ENCODE measurements at regions of chr10 and their contacts with region 1.

Region 1: GRCh38 chr10:75187961-75188426 is 22.6 kb upstream of the VDAC2 start:
- DNase-seq: peak; percentile 77
- H3K4me3 Mint-ChIP-seq: no peak overlapping the region
- H3K27ac Mint-ChIP-seq: no peak overlapping the region
- H3K4me1 Mint-ChIP-seq: peaks cover 8% of the 10 kb centered on the region
- H3K27me3 Mint-ChIP-seq: no peaks in the 10 kb centered on the region
- CTCF ChIP-seq: peak; percentile 75

Region 2: GRCh38 chr10:75226656-75227055 is 38.7 kb after region 1 on chr10:
- CTCF ChIA-PET with region 1: interaction called, 49 read pairs
- intact Hi-C with region 1: loop called (anchors 1 kb)
- DNase-seq: no peak
- H3K4me3 Mint-ChIP-seq: no peak overlapping the region
- H3K27ac Mint-ChIP-seq: peak overlapping the region; percentile 47
- H3K4me1 Mint-ChIP-seq: peaks cover 85% of the 10 kb centered on the region
- H3K27me3 Mint-ChIP-seq: no peaks in the 10 kb centered on the region
- CTCF ChIP-seq: no peak

Region 3: DNA sequence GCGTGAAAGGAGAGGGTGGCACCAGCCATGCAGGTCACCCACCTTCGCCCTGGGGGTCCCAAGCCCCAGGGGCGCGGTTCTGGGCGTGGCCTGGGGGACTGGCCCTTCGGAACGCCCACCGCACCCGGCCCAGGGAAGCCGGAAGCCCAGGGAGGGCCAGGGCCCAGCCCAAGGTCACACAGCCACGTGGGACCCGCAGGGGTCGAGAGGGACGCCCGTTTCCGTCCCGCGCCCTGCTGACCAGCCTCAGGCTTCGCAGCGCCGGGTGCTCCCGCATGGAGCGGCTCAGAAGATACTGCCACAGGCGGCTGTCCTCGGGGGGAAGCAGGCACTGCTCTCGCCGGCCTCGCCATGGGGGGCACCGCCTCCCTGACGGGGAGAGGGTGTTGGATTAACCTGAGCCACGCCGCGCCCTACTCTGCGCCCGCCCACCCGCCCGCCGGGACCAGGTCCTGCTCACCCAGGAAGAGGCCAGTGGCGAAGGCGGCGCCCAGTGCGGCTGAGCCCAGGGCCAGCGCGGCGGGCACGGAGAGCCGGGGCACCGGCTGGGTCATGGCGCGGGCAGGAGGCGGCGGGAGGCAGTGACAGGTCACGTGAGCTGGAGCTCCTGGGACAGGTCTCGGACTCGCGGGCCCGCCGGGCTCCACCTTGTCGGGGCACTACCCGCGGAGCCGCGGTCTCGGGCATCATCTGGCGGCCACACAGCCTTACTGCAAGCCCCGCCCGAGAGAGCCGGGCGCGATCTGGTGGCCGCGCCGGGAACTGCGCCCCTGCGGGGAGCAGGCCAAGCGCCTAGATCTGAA is 47.6 kb after region 1 on chr10 and contains the start of gene COMTD1:
- CTCF ChIA-PET with region 1: interaction called, 67 read pairs
- intact Hi-C with region 1: loop called (anchors 1 kb)
- DNase-seq: peak; percentile 99
- H3K4me3 Mint-ChIP-seq: peak within 1 kb of the TSS; percentile 76
- H3K27ac Mint-ChIP-seq: peak within 1 kb of the TSS; percentile 17
- H3K4me1 Mint-ChIP-seq: peaks cover 22% of the 10 kb centered on the region
- H3K27me3 Mint-ChIP-seq: no peaks in the 10 kb centered on the region
- CTCF ChIP-seq: peak; percentile 100
- total RNA-seq, gene COMTD1: 52.4 and 67.6 TPM in 2 replicates

Region 4: DNA sequence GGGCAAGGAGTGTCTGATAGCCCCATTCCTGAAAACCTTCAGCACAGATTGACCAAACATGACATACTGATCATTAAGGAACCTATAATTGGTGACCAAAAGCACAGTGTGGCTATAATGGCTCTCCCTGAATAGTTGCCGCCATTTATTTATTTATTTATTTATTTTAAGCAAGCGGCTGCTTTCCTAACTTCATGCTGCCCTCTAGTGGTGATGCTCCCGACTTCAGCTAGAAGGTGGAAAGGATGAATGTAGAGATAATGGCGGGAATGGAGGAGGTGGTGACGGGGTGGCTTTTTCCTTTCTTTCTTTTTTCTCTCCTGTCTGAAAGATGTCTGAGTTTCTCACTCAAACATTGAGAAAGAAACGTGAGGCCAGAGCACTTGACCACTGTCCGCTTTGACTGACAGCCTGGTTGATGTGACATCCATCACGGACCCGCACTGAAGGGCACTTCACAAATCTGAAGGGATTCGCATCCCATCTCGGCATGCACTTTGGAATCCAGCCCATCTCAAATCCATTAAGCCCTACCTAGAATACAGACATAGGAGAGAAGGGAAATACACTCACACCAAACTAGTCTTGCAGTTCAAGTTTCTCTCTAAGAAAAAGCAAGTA is 1359.5 kb after region 1 on chr10:
- CTCF ChIA-PET with region 1: no interaction called
- intact Hi-C with region 1: loop called (anchors 5 kb)
- DNase-seq: peak; percentile 85
- H3K4me3 Mint-ChIP-seq: no peak overlapping the region
- H3K27ac Mint-ChIP-seq: no peak overlapping the region
- H3K4me1 Mint-ChIP-seq: no peaks in the 10 kb centered on the region
- H3K27me3 Mint-ChIP-seq: peaks cover 8% of the 10 kb centered on the region
- CTCF ChIP-seq: peak; percentile 73